ENCODE measurements at regions of chr16 and their contacts with region 1.

Region 1: DNA sequence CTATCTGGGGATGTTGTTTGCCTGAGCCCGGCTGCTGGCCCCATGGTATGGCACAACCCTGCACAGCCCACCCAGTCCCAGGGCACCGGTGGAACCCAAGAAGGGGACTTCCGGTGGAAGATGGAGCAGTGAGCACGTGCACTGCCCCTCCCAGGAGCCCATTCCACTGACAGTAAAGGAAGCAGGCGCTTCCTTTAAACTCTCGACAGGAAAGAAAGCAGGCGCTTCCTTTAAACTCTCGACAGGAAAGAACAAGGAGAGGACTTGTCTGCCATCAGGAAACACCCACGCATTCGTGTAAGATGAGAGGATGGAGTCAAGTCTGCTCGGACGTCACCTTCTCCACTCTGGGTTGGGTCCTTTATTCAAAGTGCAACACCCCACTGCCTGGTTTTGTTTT is 53.7 kb downstream of the IL21R start:
- DNase-seq: no peak
- H3K4me3 ChIP-seq: no peak overlapping the region
- H3K27ac ChIP-seq: no peak overlapping the region
- H3K4me1 ChIP-seq: no peaks in the 10 kb centered on the region
- H3K27me3 ChIP-seq: no peaks in the 10 kb centered on the region
- CTCF ChIP-seq: no peak

Region 2: DNA sequence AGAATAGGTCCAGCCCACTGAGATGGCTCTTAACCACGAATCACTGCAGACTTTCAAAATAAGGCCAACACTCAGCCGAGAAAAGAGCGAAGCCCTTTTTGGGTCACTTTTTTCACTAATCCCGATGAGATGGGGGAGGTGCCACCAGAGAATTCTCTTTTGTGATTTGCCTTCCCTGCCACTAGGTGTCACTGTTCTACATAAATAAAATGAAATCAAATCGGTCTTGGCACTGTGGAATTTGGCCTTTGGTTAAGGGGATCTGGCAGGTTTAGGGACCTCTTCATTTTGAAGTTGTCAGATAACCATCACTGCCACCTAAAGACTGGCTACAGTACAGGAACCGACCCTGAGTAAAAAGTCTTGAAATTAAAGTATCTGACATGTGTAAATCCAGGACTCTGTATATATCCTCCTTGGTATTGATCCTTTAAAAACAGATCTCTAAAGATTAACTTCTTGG is 1616.9 kb before region 1 on chr16:
- intact Hi-C with region 1: loop called (anchors 5 kb)
- DNase-seq: peak; percentile 20
- H3K4me3 ChIP-seq: no peak overlapping the region
- H3K27ac ChIP-seq: no peak overlapping the region
- H3K4me1 ChIP-seq: no peaks in the 10 kb centered on the region
- H3K27me3 ChIP-seq: no peaks in the 10 kb centered on the region
- CTCF ChIP-seq: peak; percentile 64

Region 3: GRCh38 chr16:27066668-27067537 is 388.8 kb before region 1 on chr16 and contains the start of gene C16orf82:
- intact Hi-C with region 1: no loop called
- DNase-seq: no peak
- H3K4me3 ChIP-seq: no peak within 1 kb of the TSS
- H3K27ac ChIP-seq: no peak within 1 kb of the TSS
- H3K4me1 ChIP-seq: no peaks in the 10 kb centered on the region
- H3K27me3 ChIP-seq: no peaks in the 10 kb centered on the region
- CTCF ChIP-seq: no peak
- total RNA-seq, gene C16orf82: not detected

Region 4: GRCh38 chr16:27179500-27180072 is 276.1 kb before region 1 on chr16:
- intact Hi-C with region 1: loop called (anchors 5 kb)
- DNase-seq: peak; percentile 93
- H3K4me3 ChIP-seq: no peak overlapping the region
- H3K27ac ChIP-seq: no peak overlapping the region
- H3K4me1 ChIP-seq: no peaks in the 10 kb centered on the region
- H3K27me3 ChIP-seq: no peaks in the 10 kb centered on the region
- CTCF ChIP-seq: peak; percentile 92

Region 5: GRCh38 chr16:27847030-27847550 is 391.4 kb after region 1 on chr16:
- intact Hi-C with region 1: no loop called
- DNase-seq: no peak
- H3K4me3 ChIP-seq: no peak overlapping the region
- H3K27ac ChIP-seq: no peak overlapping the region
- H3K4me1 ChIP-seq: no peaks in the 10 kb centered on the region
- H3K27me3 ChIP-seq: no peaks in the 10 kb centered on the region
- CTCF ChIP-seq: no peak